ENCODE measurements at regions of chr5 and their contacts with region 1.

Region 1: GRCh38 chr5:147175516-147176097 is 59.2 kb upstream of the STK32A start:
- DNase-seq: peak; percentile 86
- ATAC-seq: peak; percentile 75
- H3K4me3 ChIP-seq: no peak overlapping the region; a peak in 1 of 6 replicates
- H3K27ac ChIP-seq: peak overlapping the region; percentile 82
- H3K4me1 ChIP-seq: peaks cover 67% of the 10 kb centered on the region
- H3K27me3 ChIP-seq: no peaks in the 10 kb centered on the region
- CTCF ChIP-seq: no peak
- EP300 ChIP-seq: peak; percentile 39 to 84; a peak in 2 of 4 replicates
- POLR2A ChIP-seq: no peak
- RAD21 ChIP-seq: no peak

Region 2: GRCh38 chr5:147093160-147093559 is 82.4 kb before region 1 on chr5:
- CTCF ChIA-PET with region 1: no interaction called
- POLR2A ChIA-PET with region 1: no interaction called
- in situ Hi-C with region 1: no loop called
- intact Hi-C with region 1: no loop called
- DNase-seq: no peak
- ATAC-seq: no peak
- H3K4me3 ChIP-seq: no peak overlapping the region
- H3K27ac ChIP-seq: no peak overlapping the region
- H3K4me1 ChIP-seq: 0 out of 2 replicates have a peak, but pooled peaks cover under 1% of the 10 kb centered on the region
- H3K27me3 ChIP-seq: no peaks in the 10 kb centered on the region
- CTCF ChIP-seq: no peak
- EP300 ChIP-seq: no peak
- POLR2A ChIP-seq: no peak
- RAD21 ChIP-seq: no peak

Region 3: GRCh38 chr5:147140558-147140957 is 35.0 kb before region 1 on chr5:
- CTCF ChIA-PET with region 1: no interaction called
- POLR2A ChIA-PET with region 1: interaction called, 6 read pairs
- in situ Hi-C with region 1: no loop called
- intact Hi-C with region 1: loop called (anchors 2 kb)
- DNase-seq: peak; percentile 79
- ATAC-seq: peak; percentile 90
- H3K4me3 ChIP-seq: no peak overlapping the region
- H3K27ac ChIP-seq: no peak overlapping the region
- H3K4me1 ChIP-seq: peaks cover 30% of the 10 kb centered on the region
- H3K27me3 ChIP-seq: no peaks in the 10 kb centered on the region
- CTCF ChIP-seq: peak; percentile 26; the same call in 1 of the 2 replicates
- EP300 ChIP-seq: peak in 1 of 2 experiments; percentile 47; a peak in 2 of 4 replicates
- POLR2A ChIP-seq: no peak
- RAD21 ChIP-seq: no peak

Region 4: GRCh38 chr5:147509710-147510651 is 334.4 kb after region 1 on chr5 and contains the start of gene DPYSL3:
- CTCF ChIA-PET with region 1: no interaction called
- POLR2A ChIA-PET with region 1: no interaction called
- in situ Hi-C with region 1: no loop called
- intact Hi-C with region 1: no loop called
- DNase-seq: no peak
- ATAC-seq: peak; percentile 84
- H3K4me3 ChIP-seq: no peak within 1 kb of the TSS
- H3K27ac ChIP-seq: no peak within 1 kb of the TSS
- H3K4me1 ChIP-seq: no peaks in the 10 kb centered on the region
- H3K27me3 ChIP-seq: peaks cover 0 to 23% of the 10 kb centered on the region in 2 experiments; a peak in 3 of 5 replicates
- CTCF ChIP-seq: no peak
- EP300 ChIP-seq: no peak
- POLR2A ChIP-seq: no peak
- RAD21 ChIP-seq: no peak
- total RNA-seq, gene DPYSL3: 0.15 TPM in 1 of 2 replicates, not detected in the other